Posterior vena cava (tissue), 2 donors: ENCODE measurements at regions of chr17 and their contacts with region 1.

Region 1: GRCh38 chr17:49637050-49637449 is 40.8 kb downstream of the SPOP start:
- DNase-seq: no peak

Region 2: GRCh38 chr17:49687878-49688491 is 50.9 kb after region 1 on chr17:
- intact Hi-C with region 1: loop called (anchors 5 kb)
- DNase-seq: peak; percentile 25